SK-N-SH (cell line): ENCODE measurements at regions of chr22 and their contacts with region 1.

Region 1: DNA sequence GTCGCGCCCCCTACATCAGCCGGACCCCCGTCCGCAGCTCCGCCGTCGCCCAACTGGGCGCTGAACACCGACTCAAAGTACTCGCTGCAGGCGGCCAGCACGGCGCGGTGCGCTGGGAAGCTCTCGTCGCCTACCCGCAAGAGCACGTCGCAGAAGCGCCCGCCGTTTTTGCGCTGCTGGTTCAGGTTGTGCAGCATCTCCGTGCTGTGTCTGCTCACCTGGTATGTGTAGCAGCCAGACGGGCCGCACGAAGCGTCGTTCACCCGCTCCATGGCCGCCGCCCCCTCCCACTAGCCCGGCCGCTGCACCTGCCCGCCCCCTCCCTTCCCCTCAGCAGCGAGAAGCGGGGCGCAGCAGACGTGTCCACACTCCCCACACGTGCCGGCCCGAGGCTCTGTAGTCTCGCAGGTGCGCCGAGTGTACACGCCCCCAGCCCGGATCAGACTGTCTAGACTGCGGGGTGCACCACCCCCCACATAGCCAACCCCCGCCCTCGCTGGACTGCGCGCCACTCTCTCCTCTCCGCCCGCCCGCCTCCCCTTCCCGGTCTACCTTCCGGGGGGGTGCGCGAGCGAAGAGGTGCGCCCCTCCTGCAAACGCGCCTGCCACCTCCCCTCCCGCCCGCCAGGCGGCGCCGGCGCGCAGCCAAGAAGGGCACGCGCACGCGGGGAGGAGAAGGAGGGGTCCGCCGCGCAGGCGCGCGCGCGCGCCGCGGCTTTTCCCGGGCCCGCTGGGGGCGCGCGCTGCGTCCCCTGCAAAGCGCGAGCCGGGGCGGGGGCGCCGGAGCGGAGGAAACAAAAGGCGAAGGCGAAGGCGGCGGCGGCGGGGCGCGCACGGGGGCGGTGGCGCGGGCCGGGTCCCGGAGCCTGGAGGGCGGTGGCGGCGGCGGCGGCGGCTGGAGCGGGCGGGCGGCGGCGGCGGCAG is 553 bp downstream of the PATZ1 start:
- DNase-seq: peak; percentile 98
- H3K4me3 ChIP-seq: peak overlapping the region; percentile 64 to 70
- H3K27ac ChIP-seq: peak overlapping the region; percentile 64 to 98; a peak in 3 of 4 replicates
- H3K4me1 ChIP-seq: peaks cover 19 to 57% of the 10 kb centered on the region in 2 experiments
- H3K27me3 ChIP-seq: no peaks in the 10 kb centered on the region
- CTCF ChIP-seq: peak; percentile 75
- EP300 ChIP-seq: no peak
- RAD21 ChIP-seq: peak; percentile 51

Region 2: GRCh38 chr22:31399211-31400028 is 53.8 kb after region 1 on chr22 and contains the start of gene DRG1:
- CTCF ChIA-PET with region 1: interaction called, 16 read pairs
- POLR2A ChIA-PET with region 1: interaction called, 32 read pairs
- DNase-seq: peak; percentile 99
- H3K4me3 ChIP-seq: peak within 1 kb of the TSS; percentile 78 to 83
- H3K27ac ChIP-seq: peak within 1 kb of the TSS; percentile 76 to 85
- H3K4me1 ChIP-seq: peaks cover 4 to 5% of the 10 kb centered on the region in 2 experiments; a peak in 2 of 4 replicates
- H3K27me3 ChIP-seq: no peaks in the 10 kb centered on the region
- CTCF ChIP-seq: no peak
- EP300 ChIP-seq: peak in 1 of 2 experiments; percentile 11; a peak in 1 of 4 replicates
- RAD21 ChIP-seq: peak; percentile 31; the same call in 1 of the 2 replicates
- polyA plus RNA-seq, gene DRG1: 56.3 and 63.8 TPM in 2 replicates